Right ventricle myocardium inferior (tissue), 1 donor: ENCODE measurements at regions of chr2 and their contacts with region 1.

Region 1: DNA sequence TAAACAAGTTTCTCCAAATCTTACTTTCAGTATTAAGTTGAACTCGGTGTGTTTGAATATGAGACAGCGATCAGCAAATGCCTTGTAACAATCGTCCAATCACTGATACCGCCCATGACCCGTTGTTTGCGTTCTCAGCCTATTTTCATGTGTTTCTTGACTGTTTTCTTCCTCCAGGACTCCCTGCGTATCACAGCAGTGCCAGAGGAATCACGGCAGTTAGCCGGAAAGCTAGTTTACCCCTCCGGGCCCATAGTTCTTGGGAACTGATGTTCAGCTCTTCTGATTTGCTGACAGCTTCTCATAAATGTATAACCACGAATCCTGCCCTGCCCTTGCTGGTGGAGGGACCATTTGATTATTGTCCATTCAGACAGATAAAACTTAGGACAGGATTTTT is 42.2 kb upstream of the TPO start:
- DNase-seq: no peak
- ATAC-seq: no peak

Region 2: GRCh38 chr2:1192121-1192520 is 179.0 kb before region 1 on chr2:
- intact Hi-C with region 1: no loop called
- DNase-seq: no peak
- ATAC-seq: no peak

Region 3: DNA sequence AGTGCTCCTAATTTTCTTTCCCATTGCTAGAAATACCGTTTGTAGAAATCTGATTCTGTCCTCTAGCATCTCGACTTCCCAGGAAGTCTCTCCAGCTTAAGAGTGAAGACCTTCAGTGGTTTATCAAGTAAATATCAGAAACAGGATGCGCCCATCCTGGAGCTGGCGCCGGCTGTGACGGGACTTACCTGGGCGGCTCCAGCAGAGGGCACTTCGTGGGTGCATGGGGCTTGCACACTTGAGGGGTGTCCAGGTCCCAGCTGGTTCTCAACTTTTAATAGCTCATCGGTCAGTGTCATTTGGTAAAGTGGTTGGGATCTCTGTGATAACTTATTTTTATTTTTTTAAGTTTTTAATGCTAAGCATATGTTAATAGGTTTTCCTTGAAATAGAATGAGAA is 124.8 kb before region 1 on chr2:
- intact Hi-C with region 1: loop called (anchors 10 kb)
- DNase-seq: no peak
- ATAC-seq: no peak

Region 4: DNA sequence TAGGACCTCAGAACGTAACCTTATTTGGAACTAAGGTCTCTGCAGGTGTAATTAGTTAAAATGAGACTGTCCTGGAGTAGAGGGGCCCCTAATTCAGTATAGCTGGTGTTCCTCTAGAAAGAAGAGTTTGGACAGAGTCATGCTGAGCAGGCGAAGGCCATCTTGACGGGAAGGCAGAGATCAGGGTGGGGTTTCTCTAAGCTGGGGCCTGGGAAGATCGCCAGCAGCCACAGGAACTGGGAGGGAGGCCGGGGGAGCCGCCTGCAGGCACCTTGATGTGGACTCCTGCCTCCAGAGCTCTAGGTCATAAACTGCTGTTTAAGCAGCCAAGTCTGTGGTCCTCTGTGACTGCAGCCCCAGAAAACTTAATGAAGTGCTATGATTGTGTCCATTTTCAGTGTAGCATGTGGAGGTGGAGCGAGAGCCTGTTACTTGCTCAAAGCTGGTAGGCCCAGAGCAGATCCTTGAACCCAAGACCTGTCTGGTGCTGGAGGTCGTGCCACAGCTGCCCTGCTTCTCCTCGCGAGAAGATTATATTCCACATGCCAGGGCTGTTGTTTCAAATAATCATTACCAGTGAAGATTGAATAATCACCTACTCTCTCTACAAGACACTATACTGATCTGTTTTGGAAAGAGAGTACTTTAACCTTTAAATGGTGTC is 147.9 kb after region 1 on chr2:
- intact Hi-C with region 1: loop called (anchors 10 kb)
- DNase-seq: no peak
- ATAC-seq: peak; percentile 8